ENCODE measurements at regions of chr16 and their contacts with region 1.

Region 1: DNA sequence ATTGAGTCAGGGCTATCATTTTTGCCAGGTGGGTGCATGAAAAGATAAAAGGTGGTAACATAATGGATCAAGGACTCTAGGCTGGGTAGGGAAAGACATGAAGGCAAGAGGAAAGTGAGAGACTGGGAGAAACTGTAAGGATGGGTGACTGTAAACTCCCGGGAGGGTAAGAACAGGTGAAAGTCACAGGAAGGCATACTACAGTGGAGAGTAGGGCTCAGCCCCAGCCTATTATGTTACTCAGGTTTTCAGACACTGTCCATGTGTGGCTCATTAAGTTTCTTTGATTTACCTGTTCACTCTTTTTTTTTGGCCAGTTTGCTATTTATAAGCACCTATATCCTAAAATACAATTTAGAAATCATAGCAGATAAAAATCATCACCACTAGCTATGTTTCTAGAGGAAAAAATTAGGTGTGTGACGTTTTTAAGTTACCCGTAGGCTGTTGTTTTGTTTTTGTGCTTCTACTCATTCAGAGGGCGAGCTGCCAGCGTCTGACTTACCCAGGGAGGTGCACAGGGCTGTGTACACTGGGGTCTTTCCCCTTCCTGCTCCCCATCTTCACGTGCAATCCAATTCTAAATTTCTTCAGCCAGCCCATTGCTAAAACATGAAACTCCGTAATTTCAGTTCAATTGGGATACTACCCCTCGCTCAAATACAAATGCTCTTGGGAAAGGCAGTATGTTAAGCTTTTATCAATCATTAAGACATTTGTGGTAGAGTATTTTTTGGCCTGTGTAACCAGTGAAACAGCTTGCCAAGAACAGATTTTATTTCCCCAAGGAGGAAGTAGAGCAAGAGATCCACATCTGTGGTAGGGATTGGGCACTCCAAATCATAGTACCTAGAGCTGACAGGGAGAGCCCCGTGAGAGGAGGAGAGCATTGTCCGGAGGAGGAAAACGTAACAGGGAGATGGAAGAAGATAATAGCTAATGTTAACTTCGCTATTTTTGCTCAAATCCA is 21.7 kb upstream of the VWA3A start:
- DNase-seq: peak; percentile 57
- H3K4me3 ChIP-seq: no peak overlapping the region
- H3K27ac ChIP-seq: peak overlapping the region; percentile 43
- H3K4me1 ChIP-seq: peaks cover 46% of the 10 kb centered on the region
- H3K27me3 ChIP-seq: no peaks in the 10 kb centered on the region
- CTCF ChIP-seq: no peak
- POLR2A ChIP-seq: no peak

Region 2: DNA sequence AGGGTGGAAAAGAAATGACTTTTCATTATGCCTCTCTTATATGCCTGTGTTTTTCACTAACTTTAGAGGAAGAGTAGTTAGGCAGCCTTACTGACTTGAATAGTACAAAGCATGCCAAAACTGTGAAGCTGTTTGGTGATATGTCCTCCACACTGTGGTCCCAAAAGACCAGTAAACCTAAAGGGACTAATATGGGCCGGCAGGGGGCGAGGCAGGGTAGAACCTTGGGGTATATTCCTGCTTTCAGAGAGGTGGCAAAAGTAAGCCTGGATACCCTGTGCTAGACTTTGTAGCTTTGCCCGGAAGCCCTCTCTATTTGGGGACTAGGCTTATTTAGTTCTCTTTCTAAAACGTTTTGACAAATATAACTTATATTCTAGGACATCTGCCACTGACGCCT is 14.8 kb before region 1 on chr16:
- CTCF ChIA-PET with region 1: interaction called, 5 read pairs
- POLR2A ChIA-PET with region 1: no interaction called
- dilution Hi-C with region 1: no loop called
- intact Hi-C with region 1: loop called (anchors 2 kb)
- DNase-seq: no peak
- H3K4me3 ChIP-seq: no peak overlapping the region
- H3K27ac ChIP-seq: no peak overlapping the region
- H3K4me1 ChIP-seq: peaks cover 7% of the 10 kb centered on the region
- H3K27me3 ChIP-seq: no peaks in the 10 kb centered on the region
- CTCF ChIP-seq: peak in 1 of 2 donors; percentile 8
- POLR2A ChIP-seq: no peak

Region 3: DNA sequence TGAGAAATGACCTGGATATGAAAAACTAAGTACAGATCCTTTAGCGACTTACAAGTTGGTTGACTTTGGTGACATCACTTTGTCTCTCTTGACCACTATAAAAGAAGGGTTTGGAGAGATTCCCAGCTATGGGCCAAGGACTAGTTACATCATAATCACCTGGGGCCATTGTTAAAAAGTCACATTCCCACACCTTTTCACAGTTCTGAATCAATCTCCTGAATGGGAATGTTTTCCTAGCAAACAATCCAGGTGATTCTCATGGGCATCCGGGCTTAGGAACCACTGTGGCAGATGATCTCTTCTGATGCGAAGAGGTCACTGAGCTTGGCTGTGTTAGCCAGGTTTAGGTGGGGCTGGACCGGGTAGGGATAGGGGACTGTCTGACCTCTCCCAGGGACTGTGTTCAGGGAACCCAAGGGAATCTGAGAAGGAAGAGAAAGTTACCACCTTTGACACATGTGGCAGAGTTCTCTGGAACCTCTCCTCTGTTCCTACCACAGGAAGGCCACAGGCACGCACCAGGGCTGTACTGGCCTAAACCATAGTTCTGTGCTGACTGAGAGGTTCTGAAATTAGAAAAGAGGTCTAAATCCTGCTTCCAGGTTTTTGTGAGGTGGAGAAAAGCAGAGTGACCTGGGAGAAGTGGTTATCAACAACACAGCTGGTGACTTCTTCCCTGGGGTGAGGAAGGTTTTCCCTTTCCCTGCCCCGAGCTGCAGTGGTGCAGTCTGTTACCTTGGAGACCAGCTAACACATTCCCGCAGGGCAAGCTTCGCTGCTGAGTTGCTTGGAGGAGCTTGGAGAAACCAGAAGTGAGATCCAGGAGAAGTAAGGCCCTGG is 21.3 kb after region 1 on chr16 and contains the start of gene VWA3A:
- CTCF ChIA-PET with region 1: no interaction called
- POLR2A ChIA-PET with region 1: no interaction called
- dilution Hi-C with region 1: no loop called
- intact Hi-C with region 1: no loop called
- DNase-seq: peak; percentile 47
- H3K4me3 ChIP-seq: no peak within 1 kb of the TSS
- H3K27ac ChIP-seq: no peak within 1 kb of the TSS
- H3K4me1 ChIP-seq: no peaks in the 10 kb centered on the region
- H3K27me3 ChIP-seq: no peaks in the 10 kb centered on the region
- CTCF ChIP-seq: no peak
- POLR2A ChIP-seq: no peak
- total RNA-seq, gene VWA3A: 0.46 and 0.84 TPM in 2 replicates

Region 4: DNA sequence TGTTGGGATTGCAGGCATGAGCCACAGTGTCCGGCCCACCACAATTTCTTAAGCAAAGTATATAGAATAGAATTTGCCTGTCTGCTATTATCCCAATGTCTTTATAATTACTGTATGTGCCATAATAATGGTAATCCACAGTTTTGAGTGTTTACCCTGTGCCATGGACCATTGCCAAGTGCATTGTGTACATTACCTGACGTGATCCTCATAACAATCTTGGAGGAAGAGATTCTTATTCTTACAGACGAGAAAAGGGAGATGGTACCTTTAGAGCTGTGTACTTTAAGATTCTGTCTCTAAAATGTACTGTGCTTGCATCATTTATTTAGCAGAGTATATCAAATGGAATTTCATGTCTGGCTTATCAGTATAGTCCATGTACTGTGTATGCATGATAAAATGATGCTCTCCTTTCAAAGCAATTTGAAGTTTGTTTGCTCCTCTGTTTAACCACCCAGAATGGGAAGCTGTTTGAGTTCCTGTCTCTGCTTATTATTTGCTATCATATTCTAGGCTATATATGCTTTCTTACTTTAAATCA is 317.5 kb after region 1 on chr16:
- CTCF ChIA-PET with region 1: no interaction called
- POLR2A ChIA-PET with region 1: no interaction called
- dilution Hi-C with region 1: no loop called
- intact Hi-C with region 1: no loop called
- DNase-seq: no peak
- H3K4me3 ChIP-seq: no peak overlapping the region
- H3K27ac ChIP-seq: no peak overlapping the region
- H3K4me1 ChIP-seq: peaks cover 17% of the 10 kb centered on the region
- H3K27me3 ChIP-seq: no peaks in the 10 kb centered on the region
- CTCF ChIP-seq: no peak
- POLR2A ChIP-seq: no peak